ENCODE measurements at regions of chr21 and their contacts with region 1.

Region 1: DNA sequence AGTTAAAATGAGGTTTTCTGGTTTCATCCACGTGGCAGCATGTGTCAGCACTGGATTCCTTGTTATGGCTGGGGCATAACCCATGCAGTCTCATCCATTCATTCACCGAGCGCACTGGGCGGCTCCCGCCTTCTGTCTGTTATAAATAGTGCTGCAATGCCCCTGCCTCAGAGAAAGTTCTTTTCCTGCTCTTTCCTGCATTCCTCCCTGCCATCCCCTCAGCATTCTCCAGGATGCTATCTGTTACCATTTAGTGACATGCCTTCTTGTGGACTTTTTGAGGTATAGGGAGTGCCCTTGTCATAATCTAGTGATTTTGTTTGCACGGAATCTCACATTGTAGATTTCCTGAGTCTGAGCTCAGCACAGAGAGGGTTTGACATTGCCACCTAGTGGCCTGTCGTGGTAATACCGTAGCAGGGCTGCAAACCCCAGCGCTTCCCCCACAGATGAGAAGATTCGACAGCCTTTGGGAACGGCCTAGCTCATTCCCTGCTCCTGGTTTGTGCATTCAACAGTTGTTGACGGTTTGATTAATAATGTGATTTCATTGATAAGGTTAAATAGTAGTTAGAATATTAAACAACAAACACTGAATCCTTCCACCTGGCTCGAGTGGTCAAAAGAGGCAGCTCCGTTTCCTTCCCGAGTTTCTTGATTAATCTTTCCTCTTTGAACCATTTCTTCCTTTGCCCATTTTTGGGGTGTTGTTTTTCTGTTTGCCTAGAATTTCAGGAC is 46.3 kb downstream of the UMODL1 start:
- DNase-seq: peak; percentile 81
- ATAC-seq: peak; percentile 96
- H3K4me3 ChIP-seq: no peak overlapping the region; the same call in 1 of the 2 replicates
- H3K27ac ChIP-seq: no peak overlapping the region
- H3K4me1 ChIP-seq: peaks cover 7% of the 10 kb centered on the region; the same call in 1 of the 2 replicates
- H3K27me3 ChIP-seq: peaks cover 31% of the 10 kb centered on the region; the same call in 1 of the 2 replicates
- CTCF ChIP-seq: peak; percentile 93
- POLR2A ChIP-seq: no peak
- RAD21 ChIP-seq: peak; percentile 93

Region 2: GRCh38 chr21:41816220-41817165 is 300.9 kb before region 1 on chr21:
- CTCF ChIA-PET with region 1: interaction called, 10 read pairs
- POLR2A ChIA-PET with region 1: no interaction called
- dilution Hi-C with region 1: no loop called
- in situ Hi-C with region 1: loop called (anchors 5 kb)
- intact Hi-C with region 1: loop called (anchors 1 kb)
- DNase-seq: peak; percentile 46
- ATAC-seq: peak; percentile 84
- H3K4me3 ChIP-seq: no peak overlapping the region
- H3K27ac ChIP-seq: no peak overlapping the region
- H3K4me1 ChIP-seq: no peaks in the 10 kb centered on the region
- H3K27me3 ChIP-seq: no peaks in the 10 kb centered on the region
- CTCF ChIP-seq: peak; percentile 75
- POLR2A ChIP-seq: no peak
- RAD21 ChIP-seq: peak; percentile 76

Region 3: DNA sequence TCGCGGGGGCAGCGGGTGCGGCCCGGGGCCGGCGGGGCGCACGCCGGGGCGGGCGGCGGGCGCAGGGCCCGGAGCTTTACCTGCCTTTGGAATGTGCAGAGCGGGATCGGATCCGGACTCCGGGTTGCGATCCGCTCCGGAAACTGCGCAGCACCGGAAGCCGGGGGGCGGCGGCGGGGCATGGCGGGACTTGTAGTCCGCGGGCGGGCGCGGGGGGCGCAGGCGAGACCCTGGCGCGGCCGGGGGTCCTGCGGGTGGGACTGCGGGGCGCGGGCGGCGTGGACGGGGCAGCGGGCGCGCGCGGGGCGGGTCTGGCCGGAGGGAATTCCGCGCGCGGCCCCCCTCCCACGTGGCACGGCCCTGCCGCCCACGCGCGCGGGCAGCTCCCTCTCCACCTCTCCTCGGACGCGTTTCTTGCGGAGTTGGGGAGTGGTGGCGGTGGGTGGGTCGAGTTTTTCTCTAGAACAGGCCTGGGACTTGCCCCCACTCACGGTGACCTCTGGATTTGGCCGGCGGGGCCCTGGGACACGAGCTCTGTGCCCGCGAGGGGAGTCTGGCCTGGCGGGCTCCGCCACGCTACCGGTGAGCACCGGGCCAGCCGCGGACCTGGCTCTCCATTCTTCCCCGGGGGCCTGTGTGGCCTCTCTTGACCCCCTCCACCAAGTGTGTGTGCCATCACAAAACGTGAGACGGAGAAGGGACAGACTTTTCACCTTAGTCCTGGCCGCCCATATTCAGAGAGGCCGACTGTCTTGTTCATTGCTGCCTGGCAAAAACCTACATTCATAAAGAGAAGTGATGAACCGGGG is 238.0 kb before region 1 on chr21 and contains the start of gene PRDM15:
- CTCF ChIA-PET with region 1: no interaction called
- POLR2A ChIA-PET with region 1: interaction called, 6 read pairs
- dilution Hi-C with region 1: no loop called
- in situ Hi-C with region 1: no loop called
- intact Hi-C with region 1: loop called (anchors 2 kb)
- DNase-seq: peak; percentile 82
- ATAC-seq: peak; percentile 88
- H3K4me3 ChIP-seq: peak within 1 kb of the TSS; percentile 88
- H3K27ac ChIP-seq: peak within 1 kb of the TSS; percentile 99
- H3K4me1 ChIP-seq: peaks cover 3% of the 10 kb centered on the region
- H3K27me3 ChIP-seq: no peaks in the 10 kb centered on the region
- CTCF ChIP-seq: no peak
- POLR2A ChIP-seq: 0 out of 2 replicates have a peak, but pooled peaks have one; percentile 31
- RAD21 ChIP-seq: no peak
- total RNA-seq, gene PRDM15: 5.6 and 8.8 TPM in 2 replicates

Region 4: GRCh38 chr21:41948078-41948895 is 169.1 kb before region 1 on chr21:
- CTCF ChIA-PET with region 1: no interaction called
- POLR2A ChIA-PET with region 1: no interaction called
- dilution Hi-C with region 1: no loop called
- in situ Hi-C with region 1: loop called (anchors 5 kb)
- intact Hi-C with region 1: no loop called
- DNase-seq: peak; percentile 43
- ATAC-seq: peak; percentile 80
- H3K4me3 ChIP-seq: no peak overlapping the region
- H3K27ac ChIP-seq: no peak overlapping the region
- H3K4me1 ChIP-seq: peaks cover 21% of the 10 kb centered on the region
- H3K27me3 ChIP-seq: no peaks in the 10 kb centered on the region
- CTCF ChIP-seq: no peak
- POLR2A ChIP-seq: no peak
- RAD21 ChIP-seq: no peak

Region 5: GRCh38 chr21:42199488-42200458 is 82.4 kb after region 1 on chr21:
- CTCF ChIA-PET with region 1: no interaction called
- POLR2A ChIA-PET with region 1: no interaction called
- dilution Hi-C with region 1: no loop called
- in situ Hi-C with region 1: no loop called
- intact Hi-C with region 1: no loop called
- DNase-seq: peak; percentile 77
- ATAC-seq: peak; percentile 75
- H3K4me3 ChIP-seq: no peak overlapping the region
- H3K27ac ChIP-seq: peak overlapping the region; percentile 75; the same call in 1 of the 2 replicates
- H3K4me1 ChIP-seq: peaks cover 12% of the 10 kb centered on the region
- H3K27me3 ChIP-seq: peaks cover 10% of the 10 kb centered on the region; the same call in 1 of the 2 replicates
- CTCF ChIP-seq: no peak
- POLR2A ChIP-seq: no peak
- RAD21 ChIP-seq: no peak